Panc1 (cell line): ENCODE measurements at regions of chr17 and their contacts with region 1.

Region 1: GRCh38 chr17:73278465-73279453 is 17.1 kb upstream of the CPSF4L start:
- DNase-seq: no peak
- ATAC-seq: 0 out of 2 replicates have a peak, but pooled peaks have one; percentile 40
- H3K4me3 ChIP-seq: no peak overlapping the region
- H3K27ac ChIP-seq: 0 out of 2 replicates have a peak overlapping the region, but pooled peaks have one; percentile 17
- H3K4me1 ChIP-seq: peaks cover 7% of the 10 kb centered on the region; the same call in 1 of the 2 replicates
- H3K27me3 ChIP-seq: no peaks in the 10 kb centered on the region
- CTCF ChIP-seq: no peak

Region 2: DNA sequence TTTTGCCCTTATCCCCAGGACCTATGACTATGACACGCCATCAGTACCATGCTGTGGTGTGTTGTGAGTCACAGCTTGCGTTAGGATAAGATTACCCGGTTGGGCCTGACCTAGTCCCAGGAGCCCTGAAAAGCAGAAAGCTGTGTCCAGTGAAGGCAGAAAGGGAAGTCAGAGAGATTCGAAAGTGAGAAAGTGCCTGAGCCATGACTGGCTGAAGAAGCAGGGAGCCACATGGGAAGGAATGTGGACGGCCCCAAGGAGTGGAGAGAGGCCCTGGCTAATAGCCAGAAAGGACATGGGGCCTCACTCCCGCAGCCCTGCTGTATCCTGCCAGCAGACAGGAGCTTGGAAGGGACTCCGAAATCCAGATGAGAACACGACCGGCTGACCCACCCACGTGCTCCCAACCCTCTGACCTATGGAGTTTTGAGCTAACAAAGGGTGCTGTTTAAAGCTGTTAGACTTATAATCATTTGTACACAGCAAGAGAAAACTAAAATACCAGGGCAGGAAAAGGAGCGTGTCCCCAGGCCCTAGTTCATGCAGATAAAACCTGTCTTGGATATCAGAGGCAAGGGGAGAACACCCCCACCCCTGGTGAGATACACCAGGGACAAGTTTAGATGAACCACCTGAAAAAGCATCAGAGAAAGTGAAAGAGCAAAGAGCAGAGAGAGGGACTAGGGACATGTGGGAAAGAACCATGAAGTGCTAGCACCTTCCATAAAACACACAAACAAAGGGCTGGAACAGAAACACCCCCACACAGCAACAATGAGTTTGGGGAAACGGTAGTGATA is 301.6 kb before region 1 on chr17:
- CTCF ChIA-PET with region 1: no interaction called
- POLR2A ChIA-PET with region 1: no interaction called
- in situ Hi-C with region 1: loop called (anchors 10 kb)
- intact Hi-C with region 1: no loop called
- DNase-seq: no peak
- ATAC-seq: peak; percentile 73
- H3K4me3 ChIP-seq: peak overlapping the region; percentile 3 to 27; a peak in 3 of 4 replicates
- H3K27ac ChIP-seq: peak overlapping the region; percentile 83
- H3K4me1 ChIP-seq: peaks cover 29% of the 10 kb centered on the region
- H3K27me3 ChIP-seq: no peaks in the 10 kb centered on the region
- CTCF ChIP-seq: no peak

Region 3: GRCh38 chr17:73359987-73360410 is 81.2 kb after region 1 on chr17:
- CTCF ChIA-PET with region 1: interaction called, 12 read pairs
- POLR2A ChIA-PET with region 1: no interaction called
- in situ Hi-C with region 1: no loop called
- intact Hi-C with region 1: no loop called
- DNase-seq: no peak
- ATAC-seq: peak; percentile 39
- H3K4me3 ChIP-seq: no peak overlapping the region
- H3K27ac ChIP-seq: no peak overlapping the region
- H3K4me1 ChIP-seq: no peaks in the 10 kb centered on the region
- H3K27me3 ChIP-seq: no peaks in the 10 kb centered on the region
- CTCF ChIP-seq: no peak